Activated T-helper 2 cell treated with anti-CD3 and anti-CD28 coated beads, Interferon-gamma antibody, Interleukin-2, Interleukin-4, amounts not matched to agents 10 μg/mL and 5 μg/mL and 100 μg/mL, durations not matched to agents 14 hours and 24 hours and 36 hours (primary cell): ENCODE measurements at regions of chr7 and their contacts with region 1.

Region 1: DNA sequence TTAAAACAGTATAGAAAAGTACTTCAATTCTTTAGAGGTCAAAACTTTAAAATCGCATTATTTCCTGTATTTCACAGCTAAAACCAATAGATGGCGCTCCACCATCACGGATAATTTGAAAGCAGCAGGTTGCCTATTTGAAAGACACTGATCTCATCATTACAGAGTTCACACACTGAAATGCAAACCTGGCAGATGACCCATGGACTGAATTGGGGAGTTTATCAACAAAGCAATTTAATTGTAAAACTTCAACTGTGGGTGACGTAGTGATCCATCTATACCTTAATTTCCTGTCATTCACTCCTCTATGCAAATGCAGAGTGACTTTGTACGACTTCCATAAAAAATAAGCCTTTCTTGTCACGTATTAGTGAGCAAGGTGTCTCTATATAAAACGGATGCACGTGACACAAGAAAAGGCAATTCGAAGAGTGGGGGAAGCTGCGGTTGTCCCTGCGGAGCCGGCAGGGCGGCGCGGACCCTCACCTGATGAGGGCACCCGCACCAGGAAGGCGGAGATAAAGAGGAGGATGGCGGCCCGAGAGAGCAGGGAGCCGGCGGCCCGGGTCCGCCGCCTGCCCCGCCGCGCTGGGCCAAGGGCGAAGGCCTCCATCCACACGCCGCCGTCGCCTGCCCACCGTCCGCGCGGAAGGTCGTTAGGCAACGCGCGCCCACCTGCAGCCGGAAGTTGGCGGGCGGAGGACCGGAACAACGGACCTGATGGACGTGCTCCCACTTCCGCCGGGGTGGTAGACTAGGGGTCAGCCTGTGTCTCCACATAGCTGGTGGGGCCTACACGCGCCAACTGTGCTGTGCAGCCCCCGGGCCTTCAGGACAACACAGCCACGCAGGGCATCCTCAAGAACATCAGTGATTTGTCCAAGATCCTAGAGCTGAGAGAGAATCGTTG is at the start of gene ZPBP:
- DNase-seq: peak; percentile 40
- H3K4me3 Mint-ChIP-seq: peak within 1 kb of the TSS; percentile 81
- H3K27ac Mint-ChIP-seq: peak within 1 kb of the TSS; percentile 39
- H3K4me1 Mint-ChIP-seq: peaks cover 9% of the 10 kb centered on the region
- H3K27me3 Mint-ChIP-seq: peaks cover 30% of the 10 kb centered on the region
- total RNA-seq, gene ZPBP: not detected in 2 replicates

Region 2: GRCh38 chr7:50205011-50205410 is 112.2 kb after region 1 on chr7:
- intact Hi-C with region 1: loop called (anchors 2 kb)
- DNase-seq: no peak
- H3K4me3 Mint-ChIP-seq: no peak overlapping the region
- H3K27ac Mint-ChIP-seq: no peak overlapping the region
- H3K4me1 Mint-ChIP-seq: peaks cover 83% of the 10 kb centered on the region
- H3K27me3 Mint-ChIP-seq: no peaks in the 10 kb centered on the region

Region 3: GRCh38 chr7:50467817-50468610 is 375.2 kb after region 1 on chr7:
- intact Hi-C with region 1: loop called (anchors 1 kb)
- DNase-seq: peak; percentile 74
- H3K4me3 Mint-ChIP-seq: peak overlapping the region; percentile 7
- H3K27ac Mint-ChIP-seq: no peak overlapping the region
- H3K4me1 Mint-ChIP-seq: peaks cover 8% of the 10 kb centered on the region
- H3K27me3 Mint-ChIP-seq: peaks cover 1% of the 10 kb centered on the region

Region 4: GRCh38 chr7:50679218-50680007 is 586.6 kb after region 1 on chr7:
- intact Hi-C with region 1: loop called (anchors 1 kb)
- DNase-seq: no peak
- H3K4me3 Mint-ChIP-seq: no peak overlapping the region
- H3K27ac Mint-ChIP-seq: no peak overlapping the region
- H3K4me1 Mint-ChIP-seq: peaks cover 4% of the 10 kb centered on the region
- H3K27me3 Mint-ChIP-seq: peaks cover 11% of the 10 kb centered on the region

Region 5: GRCh38 chr7:51162724-51163329 is 1070.0 kb after region 1 on chr7:
- intact Hi-C with region 1: loop called (anchors 1 kb)
- DNase-seq: peak; percentile 57
- H3K4me3 Mint-ChIP-seq: no peak overlapping the region
- H3K27ac Mint-ChIP-seq: no peak overlapping the region
- H3K4me1 Mint-ChIP-seq: peaks cover 16% of the 10 kb centered on the region
- H3K27me3 Mint-ChIP-seq: peaks cover 39% of the 10 kb centered on the region